Body of pancreas (tissue), 4 donors: ENCODE measurements at regions of chr2 and their contacts with region 1.

Region 1: GRCh38 chr2:49616800-49617199 is 462.5 kb upstream of the FSHR start:
- DNase-seq: peak in 1 of 4 donors; percentile 6
- ATAC-seq: no peak
- H3K4me3 ChIP-seq: no peak overlapping the region
- H3K27ac ChIP-seq: no peak overlapping the region
- H3K4me1 ChIP-seq: no peaks in the 10 kb centered on the region
- H3K27me3 ChIP-seq: no peaks in the 10 kb centered on the region
- CTCF ChIP-seq: peak in 6 of 7 experiments; percentile 28 to 55 (median 36)
- POLR2A ChIP-seq: no peak

Region 2: GRCh38 chr2:49664827-49665226 is 48.0 kb after region 1 on chr2:
- intact Hi-C with region 1: no loop called
- DNase-seq: no peak
- ATAC-seq: no peak
- H3K4me3 ChIP-seq: no peak overlapping the region
- H3K27ac ChIP-seq: no peak overlapping the region
- H3K4me1 ChIP-seq: no peaks in the 10 kb centered on the region
- H3K27me3 ChIP-seq: no peaks in the 10 kb centered on the region
- CTCF ChIP-seq: no peak
- POLR2A ChIP-seq: no peak

Region 3: GRCh38 chr2:50148632-50149031 is 531.8 kb after region 1 on chr2:
- intact Hi-C with region 1: loop called (anchors 5 kb)
- DNase-seq: no peak
- ATAC-seq: no peak
- H3K4me3 ChIP-seq: no peak overlapping the region
- H3K27ac ChIP-seq: no peak overlapping the region
- H3K4me1 ChIP-seq: no peaks in the 10 kb centered on the region
- H3K27me3 ChIP-seq: no peaks in the 10 kb centered on the region
- CTCF ChIP-seq: no peak
- POLR2A ChIP-seq: no peak